ENCODE measurements at regions of chr12 and their contacts with region 1.

Region 1: GRCh38 chr12:93137656-93138612 is 208.8 kb upstream of the EEA1 start:
- DNase-seq: no peak
- ATAC-seq: peak; percentile 77
- H3K4me3 ChIP-seq: no peak overlapping the region
- H3K27ac ChIP-seq: peak overlapping the region; percentile 59; the same call in 1 of the 2 replicates
- H3K4me1 ChIP-seq: peaks cover 45% of the 10 kb centered on the region
- H3K27me3 ChIP-seq: no peaks in the 10 kb centered on the region
- CTCF ChIP-seq: no peak
- EP300 ChIP-seq: no peak; a peak in 1 of 4 replicates
- POLR2A ChIP-seq: no peak
- RAD21 ChIP-seq: no peak

Region 2: DNA sequence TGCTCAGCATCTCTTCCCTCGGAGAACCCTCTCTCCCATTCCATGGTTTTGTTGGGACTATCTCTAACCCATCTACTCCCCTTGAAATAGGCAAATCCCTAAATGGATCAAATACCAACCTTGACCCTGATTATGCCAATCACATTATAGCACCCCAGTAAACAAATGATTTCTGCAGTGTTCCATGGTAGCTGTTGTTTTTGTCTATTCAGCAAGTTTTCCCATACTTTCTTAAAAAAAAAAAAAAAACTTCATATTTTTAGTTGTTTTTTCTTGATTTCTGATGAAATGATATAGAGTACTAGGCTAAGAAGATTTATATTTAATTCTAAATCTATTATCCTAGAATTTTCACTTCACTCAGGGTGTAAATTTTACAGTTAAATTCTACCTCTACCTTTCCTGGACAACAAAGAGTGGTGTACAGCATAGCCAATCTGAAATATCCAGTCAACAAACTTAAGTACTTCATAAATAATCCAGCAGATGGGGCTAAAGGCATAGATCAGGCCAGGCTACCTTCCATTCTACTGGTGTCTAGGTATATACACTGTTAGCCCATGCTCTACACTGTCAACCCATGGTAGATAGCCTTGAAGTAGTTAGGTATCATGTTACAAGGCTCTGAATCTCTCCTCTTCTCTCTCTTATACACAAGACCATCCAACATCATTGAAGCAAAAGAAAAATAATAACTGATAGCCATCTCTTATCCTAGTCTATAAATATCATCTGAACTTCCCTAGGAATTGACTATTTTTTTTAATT is 353.0 kb before region 1 on chr12:
- CTCF ChIA-PET with region 1: interaction called, 19 read pairs
- POLR2A ChIA-PET with region 1: no interaction called
- RAD21 ChIA-PET with region 1: interaction called, 5 read pairs
- SMC1A ChIA-PET with region 1: interaction called, 7 read pairs
- in situ Hi-C with region 1: no loop called
- intact Hi-C with region 1: no loop called
- DNase-seq: peak; percentile 70
- ATAC-seq: peak; percentile 99
- H3K4me3 ChIP-seq: no peak overlapping the region
- H3K27ac ChIP-seq: no peak overlapping the region
- H3K4me1 ChIP-seq: peaks cover 2% of the 10 kb centered on the region; the same call in 1 of the 2 replicates
- H3K27me3 ChIP-seq: no peaks in the 10 kb centered on the region
- CTCF ChIP-seq: peak; percentile 51 to 84 (median 57); a peak in 5 of 6 replicates
- EP300 ChIP-seq: no peak
- POLR2A ChIP-seq: no peak
- RAD21 ChIP-seq: peak; percentile 97

Region 3: GRCh38 chr12:93060666-93061471 is 77.1 kb before region 1 on chr12:
- CTCF ChIA-PET with region 1: interaction called, 5 read pairs
- POLR2A ChIA-PET with region 1: interaction called, 6 read pairs
- RAD21 ChIA-PET with region 1: interaction called, 10 read pairs
- SMC1A ChIA-PET with region 1: interaction called, 17 read pairs
- in situ Hi-C with region 1: no loop called
- intact Hi-C with region 1: no loop called
- DNase-seq: peak; percentile 21
- ATAC-seq: peak; percentile 61
- H3K4me3 ChIP-seq: 0 out of 2 replicates have a peak overlapping the region, but pooled peaks have one; percentile 2
- H3K27ac ChIP-seq: peak overlapping the region; percentile 61
- H3K4me1 ChIP-seq: peaks cover 26% of the 10 kb centered on the region
- H3K27me3 ChIP-seq: no peaks in the 10 kb centered on the region
- CTCF ChIP-seq: no peak
- EP300 ChIP-seq: peak in 1 of 2 experiments; percentile 29; a peak in 1 of 4 replicates
- POLR2A ChIP-seq: no peak
- RAD21 ChIP-seq: peak; percentile 8; the same call in 1 of the 2 replicates

Region 4: GRCh38 chr12:93121729-93122488 is 16.0 kb before region 1 on chr12:
- CTCF ChIA-PET with region 1: interaction called, 5 read pairs
- POLR2A ChIA-PET with region 1: interaction called, 4 read pairs
- RAD21 ChIA-PET with region 1: interaction called, 7 read pairs
- SMC1A ChIA-PET with region 1: interaction called, 27 read pairs
- in situ Hi-C with region 1: no loop called
- intact Hi-C with region 1: no loop called
- DNase-seq: no peak
- ATAC-seq: no peak
- H3K4me3 ChIP-seq: no peak overlapping the region
- H3K27ac ChIP-seq: no peak overlapping the region
- H3K4me1 ChIP-seq: peaks cover 14% of the 10 kb centered on the region
- H3K27me3 ChIP-seq: no peaks in the 10 kb centered on the region
- CTCF ChIP-seq: no peak
- EP300 ChIP-seq: no peak
- POLR2A ChIP-seq: no peak
- RAD21 ChIP-seq: no peak

Region 5: GRCh38 chr12:93176165-93176564 is 38.2 kb after region 1 on chr12:
- CTCF ChIA-PET with region 1: interaction called, 86 read pairs
- POLR2A ChIA-PET with region 1: interaction called, 8 read pairs
- RAD21 ChIA-PET with region 1: interaction called, 178 read pairs
- SMC1A ChIA-PET with region 1: interaction called, 8 read pairs
- in situ Hi-C with region 1: no loop called
- intact Hi-C with region 1: no loop called
- DNase-seq: no peak
- ATAC-seq: no peak; the same call in 2 of the 3 replicates
- H3K4me3 ChIP-seq: no peak overlapping the region
- H3K27ac ChIP-seq: peak overlapping the region; percentile 39
- H3K4me1 ChIP-seq: peaks cover 15% of the 10 kb centered on the region
- H3K27me3 ChIP-seq: no peaks in the 10 kb centered on the region
- CTCF ChIP-seq: no peak
- EP300 ChIP-seq: no peak
- POLR2A ChIP-seq: no peak
- RAD21 ChIP-seq: no peak

Region 6: GRCh38 chr12:93297032-93297431 is 159.1 kb after region 1 on chr12:
- CTCF ChIA-PET with region 1: interaction called, 12 read pairs
- POLR2A ChIA-PET with region 1: no interaction called
- RAD21 ChIA-PET with region 1: interaction called, 33 read pairs
- SMC1A ChIA-PET with region 1: interaction called, 28 read pairs
- in situ Hi-C with region 1: no loop called
- intact Hi-C with region 1: no loop called
- DNase-seq: peak; percentile 75
- ATAC-seq: peak; percentile 95
- H3K4me3 ChIP-seq: peak overlapping the region; percentile 25
- H3K27ac ChIP-seq: peak overlapping the region; percentile 73
- H3K4me1 ChIP-seq: peaks cover 17% of the 10 kb centered on the region
- H3K27me3 ChIP-seq: no peaks in the 10 kb centered on the region
- CTCF ChIP-seq: no peak
- EP300 ChIP-seq: no peak
- POLR2A ChIP-seq: no peak
- RAD21 ChIP-seq: 0 out of 2 replicates have a peak, but pooled peaks have one; percentile 13

Region 7: DNA sequence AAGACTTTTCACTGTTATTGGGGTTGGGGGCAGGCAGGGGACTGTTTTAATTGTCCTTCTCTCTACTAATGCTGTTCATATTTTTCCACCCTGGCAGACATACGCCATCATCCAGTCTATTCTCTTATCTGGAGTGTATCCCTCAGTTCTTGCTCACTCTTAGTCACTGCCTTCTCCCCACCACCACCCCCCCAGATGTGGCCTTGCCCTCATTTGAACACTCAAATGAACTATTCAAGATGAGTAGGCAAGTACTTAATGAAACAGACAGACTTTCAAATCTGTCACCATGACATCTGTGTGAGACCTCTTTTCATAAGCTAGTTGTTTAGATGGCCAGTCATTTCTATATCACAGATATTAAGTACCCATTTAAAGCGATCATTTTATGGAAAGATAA is 249.8 kb after region 1 on chr12:
- CTCF ChIA-PET with region 1: interaction called, 86 read pairs
- POLR2A ChIA-PET with region 1: interaction called, 17 read pairs
- RAD21 ChIA-PET with region 1: interaction called, 133 read pairs
- SMC1A ChIA-PET with region 1: interaction called, 209 read pairs
- in situ Hi-C with region 1: no loop called
- intact Hi-C with region 1: no loop called
- DNase-seq: no peak
- ATAC-seq: peak; percentile 76
- H3K4me3 ChIP-seq: peak overlapping the region; percentile 6
- H3K27ac ChIP-seq: peak overlapping the region; percentile 35; the same call in 1 of the 2 replicates
- H3K4me1 ChIP-seq: peaks cover 27% of the 10 kb centered on the region
- H3K27me3 ChIP-seq: no peaks in the 10 kb centered on the region
- CTCF ChIP-seq: no peak
- EP300 ChIP-seq: no peak
- POLR2A ChIP-seq: no peak
- RAD21 ChIP-seq: no peak

Region 8: DNA sequence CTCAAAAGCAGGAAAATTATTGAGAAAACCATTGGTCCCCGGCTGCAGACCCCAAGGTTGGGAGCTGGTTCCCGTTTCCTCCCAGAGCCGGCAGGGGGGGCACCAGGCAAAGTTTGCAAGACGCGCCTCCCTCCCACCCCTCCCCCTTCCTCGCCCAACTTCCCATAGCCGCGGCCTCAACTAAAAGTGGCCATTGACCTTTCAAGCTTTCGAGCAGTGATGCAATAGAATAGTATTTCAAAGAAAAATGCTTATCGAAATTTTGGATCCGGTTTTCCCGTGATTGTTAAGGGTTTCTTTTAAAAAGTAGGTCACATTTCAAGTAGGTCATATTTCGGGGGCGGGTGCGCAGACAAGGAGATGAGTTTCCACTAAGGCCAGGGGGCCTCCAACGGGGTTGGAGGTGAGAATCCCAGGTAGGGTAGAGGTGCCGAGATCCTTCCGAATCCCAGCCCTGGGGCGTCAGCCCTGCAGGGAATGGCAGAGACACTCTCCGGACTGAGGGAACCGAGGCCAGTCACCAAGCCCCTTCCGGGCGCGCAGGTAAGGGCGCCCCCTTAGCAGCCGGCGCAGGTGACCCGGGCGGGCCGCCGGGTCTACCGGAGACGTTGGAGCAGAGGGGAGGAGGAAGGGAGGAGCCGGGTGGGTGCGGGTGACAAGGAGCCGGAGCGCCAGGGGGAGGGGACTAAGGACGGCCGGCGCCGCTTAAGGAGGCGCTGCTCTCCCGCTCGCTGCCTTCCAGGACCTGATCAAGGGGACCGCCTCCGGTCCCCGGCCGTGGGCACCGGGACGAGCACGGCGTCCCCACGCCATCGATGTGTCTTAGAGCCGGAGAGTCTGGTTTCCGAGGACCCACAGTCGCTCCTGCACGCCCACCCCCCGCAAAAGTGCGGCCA is 432.0 kb after region 1 on chr12:
- CTCF ChIA-PET with region 1: no interaction called
- POLR2A ChIA-PET with region 1: no interaction called
- RAD21 ChIA-PET with region 1: no interaction called
- SMC1A ChIA-PET with region 1: no interaction called
- in situ Hi-C with region 1: no loop called
- intact Hi-C with region 1: no loop called
- DNase-seq: no peak
- ATAC-seq: peak; percentile 73
- H3K4me3 ChIP-seq: peak overlapping the region; percentile 81
- H3K27ac ChIP-seq: no peak overlapping the region
- H3K4me1 ChIP-seq: peaks cover 6% of the 10 kb centered on the region; the same call in 1 of the 2 replicates
- H3K27me3 ChIP-seq: peaks cover 11 to 15% of the 10 kb centered on the region in 2 experiments
- CTCF ChIP-seq: peak; percentile 73 to 92 (median 83)
- EP300 ChIP-seq: no peak
- POLR2A ChIP-seq: no peak
- RAD21 ChIP-seq: peak; percentile 89

Measured in GM12878 (cell line).